T-cell (primary cell): ENCODE measurements at regions of chr2 and their contacts with region 1.

Region 1: DNA sequence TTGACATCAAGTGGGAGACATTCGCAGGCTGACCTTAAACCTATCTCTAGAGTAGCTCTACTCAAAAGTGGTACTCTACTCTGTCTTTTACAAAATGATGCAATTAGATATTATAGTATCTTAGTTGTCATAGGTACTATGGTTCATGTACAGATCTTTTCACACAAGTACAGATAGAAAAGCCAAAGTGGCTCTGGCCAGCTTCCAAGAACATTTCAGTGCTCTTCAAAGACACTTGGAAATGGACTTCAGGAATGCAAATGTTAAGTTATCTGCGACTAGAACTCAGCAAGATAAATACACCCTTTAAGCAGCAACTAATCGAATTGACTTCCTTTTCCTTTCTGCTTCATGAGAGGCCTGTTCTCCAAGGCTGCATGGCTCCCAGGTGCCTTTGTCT is 718.7 kb upstream of the FAM98A start:
- DNase-seq: no peak
- ATAC-seq: no peak
- H3K4me3 ChIP-seq: no peak overlapping the region
- H3K4me3 Mint-ChIP-seq: no peak overlapping the region
- H3K27ac ChIP-seq: no peak overlapping the region
- H3K27ac Mint-ChIP-seq: no peak overlapping the region
- H3K4me1 ChIP-seq: no peaks in the 10 kb centered on the region
- H3K4me1 Mint-ChIP-seq: no peaks in the 10 kb centered on the region
- H3K27me3 ChIP-seq: no peaks in the 10 kb centered on the region
- H3K27me3 Mint-ChIP-seq: no peaks in the 10 kb centered on the region

Region 2: GRCh38 chr2:34254272-34254878 is 63.4 kb before region 1 on chr2:
- CTCF ChIA-PET with region 1: no interaction called
- POLR2A ChIA-PET with region 1: interaction called in 1 of 2 experiments, 12 read pairs
- DNase-seq: no peak
- ATAC-seq: no peak
- H3K4me3 ChIP-seq: no peak overlapping the region
- H3K4me3 Mint-ChIP-seq: no peak overlapping the region
- H3K27ac ChIP-seq: no peak overlapping the region
- H3K27ac Mint-ChIP-seq: no peak overlapping the region
- H3K4me1 ChIP-seq: no peaks in the 10 kb centered on the region
- H3K4me1 Mint-ChIP-seq: no peaks in the 10 kb centered on the region
- H3K27me3 ChIP-seq: no peaks in the 10 kb centered on the region
- H3K27me3 Mint-ChIP-seq: no peaks in the 10 kb centered on the region